ENCODE measurements at regions of chr20 and their contacts with region 1.

Region 1: DNA sequence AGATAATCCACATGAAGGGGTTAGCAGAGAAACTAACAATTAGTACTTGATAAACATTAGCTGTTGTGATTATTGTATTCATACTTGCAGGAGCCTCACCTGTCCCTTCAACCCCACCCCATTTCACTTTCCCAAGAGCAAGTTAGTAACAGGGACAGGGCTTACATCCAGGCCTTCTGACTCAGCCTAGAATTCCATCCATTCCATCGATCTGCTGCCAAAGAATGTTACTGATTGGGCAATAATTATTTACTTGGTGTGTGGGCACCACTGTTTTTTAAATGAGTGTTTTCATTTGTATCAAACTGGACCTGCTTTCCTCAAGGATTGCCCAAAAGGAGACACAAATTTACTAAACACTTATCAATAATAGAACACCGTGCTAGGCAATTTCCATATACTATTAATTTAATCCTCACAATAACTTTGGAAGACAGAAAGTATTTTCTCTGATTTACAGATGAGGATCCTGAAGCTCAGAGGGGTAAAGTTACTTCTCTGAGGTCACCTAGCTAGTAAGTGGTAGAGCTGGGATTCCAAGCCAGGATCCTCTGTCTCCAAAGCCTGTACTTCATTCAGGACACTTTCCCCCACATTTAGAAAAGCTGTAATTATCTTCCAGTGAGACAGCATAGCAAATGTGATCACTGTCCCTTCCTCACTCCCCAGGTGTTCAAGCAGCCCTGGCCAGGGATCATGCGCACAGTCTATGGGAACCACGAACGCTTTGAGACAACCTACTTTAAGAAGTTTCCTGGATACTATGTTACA is 32.8 kb downstream of the GSS start:
- DNase-seq: no peak

Region 2: DNA sequence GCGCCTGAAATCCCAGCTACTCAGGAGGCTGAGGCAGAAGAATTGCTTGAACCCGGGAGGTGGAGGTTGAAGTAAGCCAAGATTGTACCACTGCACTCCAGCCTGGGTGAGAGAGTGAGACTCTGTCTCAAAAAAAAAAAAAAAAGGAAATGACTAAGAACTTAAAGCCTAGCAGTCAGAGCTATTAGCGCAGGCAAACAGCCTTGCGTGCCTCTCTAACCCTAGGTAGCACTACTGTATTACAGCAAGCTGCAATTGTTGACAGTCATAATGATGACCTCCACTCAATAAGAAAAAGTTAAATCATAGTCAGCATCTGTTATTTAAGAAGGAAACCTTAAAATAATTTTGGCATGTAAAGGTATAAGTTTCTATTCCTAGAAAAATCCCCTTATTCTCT is 18.4 kb after region 1 on chr20:
- intact Hi-C with region 1: loop called in 1 of 2 experiments (anchors 1 kb)
- DNase-seq: no peak